CD4-positive, alpha-beta T cell (primary cell): ENCODE measurements at regions of chr1 and their contacts with region 1.

Region 1: DNA sequence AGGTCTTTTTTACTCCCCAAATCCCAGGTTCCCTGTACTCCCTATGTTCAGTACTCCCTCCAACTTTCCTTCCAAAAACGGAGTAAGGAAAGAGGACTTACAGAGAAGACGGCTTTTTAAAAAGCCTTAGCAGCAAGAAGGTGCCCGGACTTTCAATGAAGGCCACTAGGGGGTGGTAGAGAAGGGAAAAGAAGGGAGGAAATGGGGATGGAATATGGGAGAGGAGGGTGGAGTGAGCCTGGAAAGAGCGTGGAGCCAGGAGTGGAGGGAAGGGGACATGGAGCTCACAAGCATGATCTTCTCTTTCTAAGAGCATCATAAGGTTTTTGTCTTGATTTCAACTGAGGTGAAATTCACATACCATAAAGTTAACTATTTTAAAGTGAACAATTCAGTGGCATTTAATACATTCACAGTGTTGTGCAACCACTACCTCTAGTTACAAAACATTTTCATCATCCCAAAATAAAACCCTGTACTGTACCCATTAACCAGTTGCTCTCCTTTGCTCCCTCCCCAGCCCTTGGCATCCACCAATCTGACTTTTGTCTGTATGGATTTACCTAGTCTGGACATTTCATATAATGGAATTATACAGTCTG is 129.9 kb downstream of the ZNF281 start:
- DNase-seq: peak in 8 of 14 experiments; percentile 5 to 55 (median 27)
- ATAC-seq: no peak
- H3K4me3 ChIP-seq: no peak overlapping the region
- H3K4me3 Mint-ChIP-seq: no peak overlapping the region
- H3K27ac ChIP-seq: no peak overlapping the region
- H3K27ac Mint-ChIP-seq: no peak overlapping the region
- H3K4me1 ChIP-seq: no peaks in the 10 kb centered on the region
- H3K4me1 Mint-ChIP-seq: no peaks in the 10 kb centered on the region
- H3K27me3 ChIP-seq: no peaks in the 10 kb centered on the region
- H3K27me3 Mint-ChIP-seq: peaks cover 5% of the 10 kb centered on the region
- CTCF ChIP-seq: peak; percentile 67

Region 2: GRCh38 chr1:200107004-200107470 is 172.9 kb before region 1 on chr1:
- CTCF ChIA-PET with region 1: no interaction called
- POLR2A ChIA-PET with region 1: no interaction called
- intact Hi-C with region 1: no loop called
- DNase-seq: no peak
- ATAC-seq: no peak
- H3K4me3 ChIP-seq: no peak overlapping the region
- H3K4me3 Mint-ChIP-seq: no peak overlapping the region
- H3K27ac ChIP-seq: no peak overlapping the region
- H3K27ac Mint-ChIP-seq: no peak overlapping the region
- H3K4me1 ChIP-seq: no peaks in the 10 kb centered on the region
- H3K4me1 Mint-ChIP-seq: no peaks in the 10 kb centered on the region
- H3K27me3 ChIP-seq: peaks cover 0 to 4% of the 10 kb centered on the region in 2 experiments
- H3K27me3 Mint-ChIP-seq: peaks cover 4% of the 10 kb centered on the region
- CTCF ChIP-seq: no peak

Region 3: GRCh38 chr1:200488375-200489165 is 208.7 kb after region 1 on chr1:
- CTCF ChIA-PET with region 1: no interaction called
- POLR2A ChIA-PET with region 1: no interaction called
- intact Hi-C with region 1: loop called (anchors 1 to 2 kb)
- DNase-seq: peak in 12 of 14 experiments; percentile 9 to 69 (median 28)
- ATAC-seq: peak; percentile 52
- H3K4me3 ChIP-seq: no peak overlapping the region
- H3K4me3 Mint-ChIP-seq: no peak overlapping the region
- H3K27ac ChIP-seq: no peak overlapping the region
- H3K27ac Mint-ChIP-seq: no peak overlapping the region
- H3K4me1 ChIP-seq: peaks cover 10% of the 10 kb centered on the region
- H3K4me1 Mint-ChIP-seq: no peaks in the 10 kb centered on the region
- H3K27me3 ChIP-seq: no peaks in the 10 kb centered on the region
- H3K27me3 Mint-ChIP-seq: no peaks in the 10 kb centered on the region
- CTCF ChIP-seq: peak; percentile 79

Region 4: DNA sequence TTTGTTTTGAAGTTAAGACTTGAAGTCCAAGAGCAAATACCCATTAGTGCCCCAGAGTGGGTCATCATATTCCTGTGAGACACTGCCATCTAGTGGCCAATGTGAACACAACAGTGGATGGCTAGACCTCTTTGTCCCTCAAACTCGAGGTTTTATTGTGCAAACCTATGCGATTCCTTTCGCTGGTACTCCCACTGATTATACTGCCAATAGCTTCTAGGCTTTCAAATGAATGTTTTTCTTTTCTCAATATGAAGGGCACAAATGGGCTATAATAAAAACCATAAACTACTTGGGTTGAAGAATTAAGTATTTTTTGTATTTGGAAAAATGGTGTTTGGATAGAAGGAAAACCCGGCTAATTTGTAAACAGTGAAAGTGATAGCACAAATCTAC is 230.3 kb after region 1 on chr1:
- CTCF ChIA-PET with region 1: no interaction called
- POLR2A ChIA-PET with region 1: no interaction called
- intact Hi-C with region 1: loop called in 1 of 2 experiments (anchors 5 kb)
- DNase-seq: peak; percentile 26 to 82 (median 52)
- ATAC-seq: peak; percentile 79
- H3K4me3 ChIP-seq: no peak overlapping the region
- H3K4me3 Mint-ChIP-seq: no peak overlapping the region
- H3K27ac ChIP-seq: no peak overlapping the region
- H3K27ac Mint-ChIP-seq: no peak overlapping the region
- H3K4me1 ChIP-seq: no peaks in the 10 kb centered on the region
- H3K4me1 Mint-ChIP-seq: no peaks in the 10 kb centered on the region
- H3K27me3 ChIP-seq: no peaks in the 10 kb centered on the region
- H3K27me3 Mint-ChIP-seq: peaks cover 4% of the 10 kb centered on the region
- CTCF ChIP-seq: peak; percentile 99